ENCODE measurements at regions of chr10 and their contacts with region 1.

Region 1: DNA sequence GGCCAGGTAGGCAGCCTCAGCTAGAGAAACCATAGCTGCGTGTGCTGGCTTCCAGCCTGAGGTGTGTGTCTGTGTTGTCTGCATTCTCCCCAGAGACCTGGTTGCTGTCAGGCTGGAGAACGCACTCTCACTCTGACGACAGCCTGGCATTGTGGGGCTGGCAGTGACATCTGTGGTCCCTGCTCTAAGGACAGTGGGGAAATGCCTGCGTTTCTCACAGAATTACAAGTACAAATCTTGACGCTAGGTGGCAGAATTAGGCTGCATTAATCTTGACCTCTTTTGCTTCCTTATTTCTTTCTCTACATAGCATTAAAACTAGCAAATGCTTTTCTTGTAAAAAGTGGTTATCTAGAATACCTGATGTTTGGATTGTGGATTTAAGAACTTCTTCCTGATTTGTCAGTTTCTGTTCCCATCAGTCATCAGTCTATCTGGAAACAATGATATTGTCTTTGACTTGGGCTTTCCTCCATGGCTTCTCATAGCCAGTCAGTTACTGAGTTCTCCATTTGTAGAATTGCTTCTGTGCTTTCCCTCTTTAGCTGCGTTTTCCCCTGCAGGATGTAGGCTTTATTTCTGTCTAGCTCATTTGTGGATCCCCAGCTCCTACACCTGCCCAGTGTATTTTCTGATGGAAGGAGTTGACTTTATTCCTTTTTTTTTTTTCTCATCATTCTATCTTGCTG is 86.0 kb downstream of the FANK1 start:
- H3K4me3 Mint-ChIP-seq: no peak overlapping the region
- H3K27ac Mint-ChIP-seq: peak overlapping the region; percentile 62
- H3K4me1 Mint-ChIP-seq: peaks cover 42% of the 10 kb centered on the region
- H3K27me3 Mint-ChIP-seq: peaks cover 3% of the 10 kb centered on the region

Region 2: GRCh38 chr10:126090911-126091728 is 108.7 kb after region 1 on chr10:
- intact Hi-C with region 1: loop called (anchors 10 kb)
- H3K4me3 Mint-ChIP-seq: no peak overlapping the region
- H3K27ac Mint-ChIP-seq: no peak overlapping the region
- H3K4me1 Mint-ChIP-seq: peaks cover 51% of the 10 kb centered on the region
- H3K27me3 Mint-ChIP-seq: no peaks in the 10 kb centered on the region

Region 3: GRCh38 chr10:126302826-126303665 is 320.6 kb after region 1 on chr10:
- intact Hi-C with region 1: loop called (anchors 2 kb)
- H3K4me3 Mint-ChIP-seq: no peak overlapping the region
- H3K27ac Mint-ChIP-seq: no peak overlapping the region
- H3K4me1 Mint-ChIP-seq: peaks cover 16% of the 10 kb centered on the region
- H3K27me3 Mint-ChIP-seq: peaks cover 6% of the 10 kb centered on the region

Region 4: DNA sequence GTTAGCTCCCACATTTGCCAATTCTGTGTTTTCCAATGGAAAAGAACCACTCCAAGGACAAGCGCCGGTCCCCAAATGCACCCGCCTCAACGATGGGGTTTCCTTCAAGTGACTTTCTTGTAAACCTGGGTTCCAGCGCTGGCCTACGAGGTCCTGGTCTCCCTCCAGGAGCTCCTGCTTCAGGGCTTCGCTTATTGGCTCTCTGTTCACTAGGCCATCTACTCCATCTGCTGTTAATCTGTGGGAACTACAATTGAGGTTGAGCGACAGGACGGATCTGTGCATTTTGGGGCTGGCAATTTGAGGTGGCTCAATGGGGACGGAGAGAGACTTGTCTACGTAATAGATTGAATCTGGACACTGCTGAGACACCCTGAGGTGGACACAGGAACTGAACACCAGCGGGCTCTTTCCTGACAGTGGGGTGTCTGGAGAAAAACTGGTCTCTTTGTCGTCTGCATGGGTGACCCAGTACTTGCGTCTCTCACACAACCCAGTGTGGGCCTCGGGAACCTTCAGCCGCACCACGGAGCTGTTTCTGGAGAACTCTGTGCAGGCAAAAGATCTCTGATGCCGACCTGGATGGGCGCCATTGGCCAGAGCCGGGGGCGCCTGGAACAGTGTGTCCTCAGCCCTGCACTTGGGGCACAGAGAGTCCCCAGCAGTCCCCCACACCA is 521.8 kb after region 1 on chr10:
- intact Hi-C with region 1: loop called (anchors 1 kb)
- H3K4me3 Mint-ChIP-seq: no peak overlapping the region
- H3K27ac Mint-ChIP-seq: no peak overlapping the region
- H3K4me1 Mint-ChIP-seq: no peaks in the 10 kb centered on the region
- H3K27me3 Mint-ChIP-seq: no peaks in the 10 kb centered on the region

Region 5: DNA sequence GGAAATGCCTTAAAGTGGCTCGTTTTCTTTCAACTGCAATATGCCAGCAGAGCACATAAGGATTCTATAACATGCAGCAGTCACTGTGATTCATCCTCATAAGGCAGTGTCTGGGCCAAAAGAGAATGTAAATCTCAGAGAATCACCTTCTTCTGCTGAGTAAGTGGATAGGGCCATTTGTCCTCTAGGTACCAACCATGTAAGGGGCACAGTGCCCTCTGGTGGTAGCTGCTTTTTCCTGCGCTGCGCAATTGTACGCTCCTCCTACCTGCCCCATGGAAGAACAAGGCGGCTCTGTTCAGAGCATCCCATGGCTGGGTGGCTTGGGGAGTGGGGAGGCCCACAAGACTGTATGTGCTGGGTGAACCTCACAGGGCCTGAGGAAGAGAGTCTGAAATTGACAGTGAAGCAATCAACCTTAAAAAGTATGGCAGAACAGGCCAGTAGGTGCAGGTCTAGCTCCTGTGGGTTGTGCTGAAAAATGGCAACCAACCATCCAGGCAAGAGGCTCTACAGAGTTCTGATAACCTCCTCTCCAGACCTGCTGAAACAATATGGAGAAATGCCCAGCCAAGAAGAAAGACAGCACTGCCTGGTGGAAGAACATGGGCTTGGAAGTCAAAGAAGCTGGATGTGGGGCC is 766.7 kb after region 1 on chr10:
- intact Hi-C with region 1: loop called (anchors 5 kb)
- H3K4me3 Mint-ChIP-seq: no peak overlapping the region
- H3K27ac Mint-ChIP-seq: no peak overlapping the region
- H3K4me1 Mint-ChIP-seq: no peaks in the 10 kb centered on the region
- H3K27me3 Mint-ChIP-seq: peaks cover 1% of the 10 kb centered on the region